ENCODE measurements at regions of chr10 and their contacts with region 1.

Region 1: GRCh38 chr10:6470894-6471618 is 109.0 kb downstream of the PRKCQ start:
- DNase-seq: no peak
- H3K4me3 ChIP-seq: no peak overlapping the region
- H3K27ac ChIP-seq: no peak overlapping the region
- H3K4me1 ChIP-seq: no peaks in the 10 kb centered on the region
- H3K27me3 ChIP-seq: no peaks in the 10 kb centered on the region
- CTCF ChIP-seq: no peak

Region 2: GRCh38 chr10:5862360-5862961 is 608.6 kb before region 1 on chr10:
- CTCF ChIA-PET with region 1: no interaction called
- POLR2A ChIA-PET with region 1: interaction called, 13 read pairs
- intact Hi-C with region 1: no loop called
- DNase-seq: no peak
- H3K4me3 ChIP-seq: no peak overlapping the region
- H3K27ac ChIP-seq: peak overlapping the region; percentile 39; the same call in 1 of the 2 replicates
- H3K4me1 ChIP-seq: peaks cover 21% of the 10 kb centered on the region
- H3K27me3 ChIP-seq: no peaks in the 10 kb centered on the region
- CTCF ChIP-seq: no peak

Region 3: GRCh38 chr10:6151087-6151977 is 319.7 kb before region 1 on chr10:
- CTCF ChIA-PET with region 1: no interaction called
- POLR2A ChIA-PET with region 1: interaction called, 10 read pairs
- intact Hi-C with region 1: no loop called
- DNase-seq: no peak
- H3K4me3 ChIP-seq: no peak overlapping the region
- H3K27ac ChIP-seq: no peak overlapping the region
- H3K4me1 ChIP-seq: no peaks in the 10 kb centered on the region
- H3K27me3 ChIP-seq: no peaks in the 10 kb centered on the region
- CTCF ChIP-seq: peak; percentile 42; the same call in 1 of the 2 replicates

Region 4: GRCh38 chr10:6283655-6284054 is 187.4 kb before region 1 on chr10:
- CTCF ChIA-PET with region 1: no interaction called
- POLR2A ChIA-PET with region 1: no interaction called
- intact Hi-C with region 1: no loop called
- DNase-seq: no peak
- H3K4me3 ChIP-seq: no peak overlapping the region
- H3K27ac ChIP-seq: no peak overlapping the region
- H3K4me1 ChIP-seq: peaks cover 19% of the 10 kb centered on the region
- H3K27me3 ChIP-seq: no peaks in the 10 kb centered on the region
- CTCF ChIP-seq: no peak

Region 5: GRCh38 chr10:6445501-6446316 is 25.3 kb before region 1 on chr10:
- CTCF ChIA-PET with region 1: no interaction called
- POLR2A ChIA-PET with region 1: no interaction called
- intact Hi-C with region 1: no loop called
- DNase-seq: peak in 1 of 2 experiments; percentile 15
- H3K4me3 ChIP-seq: no peak overlapping the region
- H3K27ac ChIP-seq: no peak overlapping the region
- H3K4me1 ChIP-seq: no peaks in the 10 kb centered on the region
- H3K27me3 ChIP-seq: no peaks in the 10 kb centered on the region
- CTCF ChIP-seq: peak; percentile 67

Measured in PC-9 (cell line).